Esophagus muscularis mucosa (tissue), 4 donors: ENCODE measurements at regions of chr14 and their contacts with region 1.

Region 1: GRCh38 chr14:55579724-55580469 is at the start of gene KTN1:
- DNase-seq: no peak
- H3K4me3 ChIP-seq: peak within 1 kb of the TSS; percentile 77 to 95 (median 90)
- H3K27ac ChIP-seq: peak within 1 kb of the TSS; percentile 93 to 98 (median 96)
- H3K4me1 ChIP-seq: peaks cover 35 to 54% (median 51%) of the 10 kb centered on the region in 4 donors
- H3K27me3 ChIP-seq: no peaks in the 10 kb centered on the region
- CTCF ChIP-seq: no peak
- EP300 ChIP-seq: no peak
- POLR2A ChIP-seq: no peak
- total RNA-seq, gene KTN1: 137 to 151 (median 146) TPM

Region 2: GRCh38 chr14:55446218-55446654 is 133.7 kb before region 1 on chr14:
- intact Hi-C with region 1: loop called (anchors 10 kb)
- DNase-seq: no peak
- H3K4me3 ChIP-seq: no peak overlapping the region
- H3K27ac ChIP-seq: no peak overlapping the region
- H3K4me1 ChIP-seq: peaks cover 5 to 25% (median 11%) of the 10 kb centered on the region in 4 donors
- H3K27me3 ChIP-seq: no peaks in the 10 kb centered on the region
- CTCF ChIP-seq: peak; percentile 41 to 70 (median 66)
- EP300 ChIP-seq: no peak
- POLR2A ChIP-seq: no peak